ENCODE measurements at regions of chr6 and their contacts with region 1.

Region 1: GRCh38 chr6:138987640-138988468 is at the start of gene REPS1:
- DNase-seq: peak; percentile 94
- ATAC-seq: peak; percentile 94
- H3K4me3 Mint-ChIP-seq: peak within 1 kb of the TSS; percentile 92
- H3K27ac Mint-ChIP-seq: peak within 1 kb of the TSS; percentile 91
- H3K4me1 Mint-ChIP-seq: peaks cover 7% of the 10 kb centered on the region
- H3K27me3 Mint-ChIP-seq: no peaks in the 10 kb centered on the region
- CTCF ChIP-seq: peak; percentile 91
- total RNA-seq, gene REPS1: 44.8 and 58.8 TPM in 2 replicates

Region 2: GRCh38 chr6:137849181-137849980 is 1138.5 kb before region 1 on chr6:
- CTCF ChIA-PET with region 1: no interaction called
- POLR2A ChIA-PET with region 1: no interaction called
- intact Hi-C with region 1: no loop called
- DNase-seq: no peak
- ATAC-seq: no peak
- H3K4me3 Mint-ChIP-seq: no peak overlapping the region
- H3K27ac Mint-ChIP-seq: no peak overlapping the region
- H3K4me1 Mint-ChIP-seq: peaks cover 26% of the 10 kb centered on the region
- H3K27me3 Mint-ChIP-seq: no peaks in the 10 kb centered on the region
- CTCF ChIP-seq: no peak

Region 3: DNA sequence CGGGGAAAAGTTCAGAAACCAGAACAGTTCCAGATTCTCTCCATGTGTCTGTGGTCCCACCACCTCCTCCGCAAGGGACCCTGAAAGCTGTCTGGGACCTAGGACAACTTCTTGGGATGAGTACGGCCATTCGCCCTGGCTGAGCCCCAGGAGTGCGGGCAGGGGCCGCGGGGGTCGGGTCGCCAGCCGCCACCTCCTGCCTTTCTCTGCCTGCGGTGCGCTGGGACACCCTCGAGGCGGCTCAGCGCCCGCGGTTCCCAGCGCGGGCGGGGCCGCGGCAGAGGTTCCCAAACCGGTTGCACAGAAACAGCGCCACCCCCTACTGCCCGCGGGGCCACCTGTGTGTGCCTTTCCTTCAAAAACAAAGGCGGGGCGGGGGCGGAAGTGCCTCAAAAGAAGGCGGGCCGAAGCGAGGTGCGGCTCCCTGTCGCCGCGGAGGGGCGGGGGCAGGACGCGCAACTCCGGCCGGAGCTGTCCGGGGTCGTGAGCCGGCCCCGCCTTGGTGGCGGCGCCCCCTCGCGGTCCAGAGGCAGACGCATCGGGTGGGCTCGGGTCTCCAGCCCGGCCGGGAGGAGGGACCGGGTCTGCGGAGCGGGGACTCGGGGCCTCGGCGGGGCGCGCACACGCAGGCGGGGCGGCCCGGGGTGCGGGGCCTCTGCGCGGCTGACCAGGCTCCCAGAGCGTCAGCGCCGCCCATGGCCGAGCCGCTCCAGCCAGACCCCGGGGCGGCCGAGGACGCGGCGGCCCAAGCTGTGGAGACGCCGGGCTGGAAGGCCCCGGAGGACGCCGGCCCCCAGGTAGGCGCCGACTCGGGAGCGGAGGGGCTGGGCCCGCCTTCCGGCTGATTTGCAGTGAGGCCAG is 583.8 kb before region 1 on chr6 and contains the start of gene HEBP2:
- CTCF ChIA-PET with region 1: no interaction called
- POLR2A ChIA-PET with region 1: interaction called, 4 read pairs
- intact Hi-C with region 1: loop called (anchors 10 kb)
- DNase-seq: peak; percentile 88
- ATAC-seq: peak; percentile 87
- H3K4me3 Mint-ChIP-seq: peak within 1 kb of the TSS; percentile 90
- H3K27ac Mint-ChIP-seq: peak within 1 kb of the TSS; percentile 89
- H3K4me1 Mint-ChIP-seq: peaks cover 20% of the 10 kb centered on the region
- H3K27me3 Mint-ChIP-seq: no peaks in the 10 kb centered on the region
- CTCF ChIP-seq: no peak
- total RNA-seq, gene HEBP2: 26.2 and 32.7 TPM in 2 replicates

Region 4: DNA sequence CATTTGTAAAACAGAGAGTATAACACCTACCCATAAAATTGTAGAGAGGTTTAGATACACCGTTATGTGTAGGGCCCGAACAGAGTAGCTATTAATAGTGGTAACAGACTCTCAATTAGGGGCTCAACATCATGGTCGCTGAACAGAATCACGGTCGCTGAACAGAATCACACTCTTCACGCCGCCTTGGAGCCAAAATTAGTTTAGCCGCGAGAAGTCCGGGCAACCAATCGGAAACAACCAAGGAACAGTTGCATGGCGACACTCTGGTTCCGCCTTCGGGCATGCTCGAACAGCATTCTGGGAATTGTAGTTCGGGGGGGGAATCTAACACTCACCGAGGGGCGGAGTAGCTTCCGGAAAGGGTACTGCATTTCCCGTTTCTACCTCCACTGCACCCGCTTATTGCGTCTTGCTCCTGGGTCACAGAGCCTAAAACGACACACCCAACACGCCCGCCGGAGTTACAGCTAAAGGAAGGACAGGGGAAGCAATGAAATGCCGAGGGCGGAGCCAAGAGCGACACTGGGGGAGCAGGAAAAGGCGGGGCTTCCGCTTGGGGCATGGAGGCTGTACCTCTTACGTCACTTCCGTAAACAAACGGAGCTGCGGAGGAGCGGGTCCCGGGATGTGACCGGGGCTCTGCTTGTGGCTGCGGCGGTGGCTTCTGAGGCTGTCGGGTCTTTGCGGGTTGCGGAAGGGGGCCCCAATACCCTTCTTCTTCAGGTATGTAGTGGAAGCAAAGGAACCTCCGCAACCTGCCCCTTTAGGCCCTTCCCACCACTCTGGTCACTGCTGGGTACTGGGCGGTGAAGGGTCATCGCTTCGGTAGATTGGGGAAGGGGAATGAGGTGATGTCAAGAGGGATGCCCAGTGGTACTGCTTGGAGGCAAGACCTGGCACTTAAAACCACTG is 214.4 kb before region 1 on chr6 and contains the start of gene CCDC28A:
- CTCF ChIA-PET with region 1: no interaction called
- POLR2A ChIA-PET with region 1: interaction called, 4 read pairs
- intact Hi-C with region 1: loop called (anchors 1 kb)
- DNase-seq: peak; percentile 90
- ATAC-seq: peak; percentile 85
- H3K4me3 Mint-ChIP-seq: peak within 1 kb of the TSS; percentile 100
- H3K27ac Mint-ChIP-seq: peak within 1 kb of the TSS; percentile 100
- H3K4me1 Mint-ChIP-seq: peaks cover 28% of the 10 kb centered on the region
- H3K27me3 Mint-ChIP-seq: no peaks in the 10 kb centered on the region
- CTCF ChIP-seq: no peak
- total RNA-seq, gene CCDC28A: 14.0 and 14.6 TPM in 2 replicates

Region 5: GRCh38 chr6:138944412-138944811 is 43.4 kb before region 1 on chr6:
- CTCF ChIA-PET with region 1: no interaction called
- POLR2A ChIA-PET with region 1: no interaction called
- intact Hi-C with region 1: loop called (anchors 2 kb)
- DNase-seq: no peak
- ATAC-seq: no peak
- H3K4me3 Mint-ChIP-seq: no peak overlapping the region
- H3K27ac Mint-ChIP-seq: no peak overlapping the region
- H3K4me1 Mint-ChIP-seq: peaks cover 10% of the 10 kb centered on the region
- H3K27me3 Mint-ChIP-seq: no peaks in the 10 kb centered on the region
- CTCF ChIP-seq: no peak

Region 6: GRCh38 chr6:139028658-139029469 is 41.0 kb after region 1 on chr6 and contains the start of gene ABRACL:
- CTCF ChIA-PET with region 1: interaction called, 5 read pairs
- POLR2A ChIA-PET with region 1: interaction called, 10 read pairs
- intact Hi-C with region 1: loop called (anchors 1 kb)
- DNase-seq: peak; percentile 83
- ATAC-seq: peak; percentile 71
- H3K4me3 Mint-ChIP-seq: no peak within 1 kb of the TSS
- H3K27ac Mint-ChIP-seq: peak within 1 kb of the TSS; percentile 95
- H3K4me1 Mint-ChIP-seq: peaks cover 14% of the 10 kb centered on the region
- H3K27me3 Mint-ChIP-seq: no peaks in the 10 kb centered on the region
- CTCF ChIP-seq: no peak
- total RNA-seq, gene ABRACL: 63.5 and 63.8 TPM in 2 replicates

Region 7: GRCh38 chr6:139134817-139135581 is 147.1 kb after region 1 on chr6 and contains the start of gene HECA:
- CTCF ChIA-PET with region 1: no interaction called
- POLR2A ChIA-PET with region 1: interaction called, 4 read pairs
- intact Hi-C with region 1: loop called (anchors 1 kb)
- DNase-seq: peak; percentile 99
- ATAC-seq: peak; percentile 73
- H3K4me3 Mint-ChIP-seq: peak within 1 kb of the TSS; percentile 95
- H3K27ac Mint-ChIP-seq: peak within 1 kb of the TSS; percentile 98
- H3K4me1 Mint-ChIP-seq: peaks cover 79% of the 10 kb centered on the region
- H3K27me3 Mint-ChIP-seq: no peaks in the 10 kb centered on the region
- CTCF ChIP-seq: no peak
- total RNA-seq, gene HECA: 34.9 and 38.3 TPM in 2 replicates